OCI-LY7 (cell line): ENCODE measurements at regions of chr7 and their contacts with region 1.

Region 1: GRCh38 chr7:103059471-103059870 is 15.1 kb downstream of the FBXL13 start:
- DNase-seq: no peak
- H3K4me3 ChIP-seq: no peak overlapping the region
- H3K27ac ChIP-seq: no peak overlapping the region
- H3K4me1 ChIP-seq: no peaks in the 10 kb centered on the region
- CTCF ChIP-seq: no peak

Region 2: GRCh38 chr7:102942181-102942866 is 117.1 kb before region 1 on chr7:
- CTCF ChIA-PET with region 1: no interaction called
- POLR2A ChIA-PET with region 1: no interaction called
- intact Hi-C with region 1: loop called (anchors 10 kb)
- DNase-seq: no peak
- H3K4me3 ChIP-seq: no peak overlapping the region
- H3K27ac ChIP-seq: no peak overlapping the region
- H3K4me1 ChIP-seq: no peaks in the 10 kb centered on the region
- CTCF ChIP-seq: no peak